ENCODE measurements at regions of chr11 and their contacts with region 1.

Region 1: GRCh38 chr11:107043242-107044006 is 25.1 kb upstream of the GUCY1A2 start:
- DNase-seq: peak; percentile 77
- H3K4me3 ChIP-seq: no peak overlapping the region
- H3K27ac ChIP-seq: no peak overlapping the region
- H3K27me3 ChIP-seq: no peaks in the 10 kb centered on the region
- CTCF ChIP-seq: no peak

Region 2: DNA sequence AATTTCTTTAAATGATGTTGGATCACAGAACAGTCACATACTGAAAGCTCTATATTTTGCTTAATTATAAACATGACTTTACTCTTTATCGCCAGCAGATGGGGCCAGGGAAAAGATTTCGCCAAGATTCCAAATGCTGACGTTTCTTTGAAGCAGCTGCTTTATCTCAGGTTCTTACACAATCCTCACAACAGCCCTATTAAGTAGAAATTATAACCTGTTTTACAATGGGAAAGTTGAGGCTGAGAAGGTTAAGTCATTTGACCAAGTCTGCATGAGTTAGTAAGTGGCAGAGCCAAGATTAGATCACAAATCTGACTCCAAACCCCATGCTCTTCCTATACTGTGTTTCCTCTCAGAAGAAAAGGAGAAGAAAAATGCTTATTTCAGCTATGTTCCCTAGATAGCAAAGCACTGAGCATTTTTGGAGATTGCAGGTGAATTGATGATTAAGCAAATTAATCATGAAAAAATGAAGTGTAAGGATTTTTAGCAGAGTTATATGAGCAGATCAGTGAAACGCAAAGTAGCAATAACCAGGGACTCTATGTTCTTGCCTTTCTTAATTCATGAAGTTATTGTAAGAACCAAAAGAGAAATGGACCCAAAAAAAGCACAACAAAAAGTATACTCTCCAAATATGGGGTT is 887.0 kb before region 1 on chr11:
- CTCF ChIA-PET with region 1: interaction called, 17 read pairs
- POLR2A ChIA-PET with region 1: no interaction called
- DNase-seq: peak; percentile 70
- H3K4me3 ChIP-seq: no peak overlapping the region
- H3K27ac ChIP-seq: no peak overlapping the region
- H3K27me3 ChIP-seq: no peaks in the 10 kb centered on the region
- CTCF ChIP-seq: peak; percentile 71

Region 3: DNA sequence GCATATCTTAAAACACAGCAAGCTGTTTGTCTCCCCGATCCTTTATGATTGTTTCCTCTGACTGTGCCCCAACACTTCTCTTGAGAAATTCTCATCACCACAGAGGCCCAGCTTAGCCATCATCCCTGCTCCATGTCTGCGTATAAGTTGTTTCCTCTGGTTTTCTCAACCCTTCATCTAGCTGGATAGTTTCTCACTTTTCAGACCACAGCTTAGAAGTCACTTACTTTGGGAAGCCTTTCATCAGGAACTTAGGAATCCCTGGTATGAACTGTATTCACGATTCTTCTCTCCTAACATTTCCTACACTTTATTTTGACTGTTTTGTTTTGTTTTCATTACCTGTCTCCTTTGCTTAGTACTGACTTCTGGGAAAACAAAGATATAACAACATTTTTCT is 320.4 kb before region 1 on chr11:
- CTCF ChIA-PET with region 1: interaction called, 14 read pairs
- POLR2A ChIA-PET with region 1: no interaction called
- DNase-seq: no peak
- H3K4me3 ChIP-seq: no peak overlapping the region
- H3K27ac ChIP-seq: no peak overlapping the region
- H3K27me3 ChIP-seq: no peaks in the 10 kb centered on the region
- CTCF ChIP-seq: no peak

Region 4: GRCh38 chr11:107011977-107012376 is 31.4 kb before region 1 on chr11:
- CTCF ChIA-PET with region 1: no interaction called
- POLR2A ChIA-PET with region 1: no interaction called
- DNase-seq: no peak
- H3K4me3 ChIP-seq: no peak overlapping the region
- H3K27ac ChIP-seq: no peak overlapping the region
- H3K27me3 ChIP-seq: peaks cover 9% of the 10 kb centered on the region
- CTCF ChIP-seq: no peak

Region 5: GRCh38 chr11:107276077-107276476 is 232.7 kb after region 1 on chr11:
- CTCF ChIA-PET with region 1: no interaction called
- POLR2A ChIA-PET with region 1: no interaction called
- DNase-seq: no peak
- H3K4me3 ChIP-seq: no peak overlapping the region
- H3K27ac ChIP-seq: no peak overlapping the region
- H3K27me3 ChIP-seq: no peaks in the 10 kb centered on the region
- CTCF ChIP-seq: no peak

Measured in AG04450 (cell line).